ENCODE measurements at regions of chrX and their contacts with region 1.

Region 1: DNA sequence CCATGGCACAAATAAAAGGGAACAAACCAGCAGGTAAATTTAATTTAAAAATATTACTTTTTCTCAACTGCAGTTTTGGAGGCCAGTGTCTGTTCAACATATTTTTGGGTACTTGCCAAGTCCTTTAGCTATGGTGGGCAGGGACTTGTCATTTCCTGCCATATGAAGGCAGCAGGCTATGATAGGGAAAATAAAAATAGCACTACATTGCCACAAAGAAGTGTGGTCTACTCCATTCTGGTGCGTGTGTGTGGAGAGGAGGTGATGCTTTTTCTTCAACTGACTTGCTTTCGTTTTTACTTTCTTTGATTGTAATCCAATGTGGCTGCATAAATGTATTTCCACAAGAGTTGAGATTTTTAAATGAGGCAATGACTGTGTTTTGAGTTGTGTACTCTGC is 17.2 kb downstream of the GPR174 start:
- DNase-seq: peak in 33 of 35 experiments; percentile 11 to 83 (median 40)
- ATAC-seq: peak; percentile 88 to 94 (median 91)
- H3K4me3 ChIP-seq: peak overlapping the region; percentile 39 to 44
- H3K4me3 Mint-ChIP-seq: peak overlapping the region; percentile 86 to 95 (median 87)
- H3K27ac ChIP-seq: peak overlapping the region; percentile 91
- H3K27ac Mint-ChIP-seq: peak overlapping the region; percentile 97 to 100
- H3K4me1 ChIP-seq: peaks cover 28 to 42% of the 10 kb centered on the region in 2 experiments
- H3K4me1 Mint-ChIP-seq: peaks cover 78 to 81% (median 80%) of the 10 kb centered on the region in 3 donors
- H3K27me3 ChIP-seq: no peaks in the 10 kb centered on the region
- H3K27me3 Mint-ChIP-seq: no peaks in the 10 kb centered on the region

Region 2: GRCh38 chrX:79110731-79111130 is 50.9 kb before region 1 on chrX:
- CTCF ChIA-PET with region 1: no interaction called
- POLR2A ChIA-PET with region 1: interaction called, 3 to 14 read pairs
- DNase-seq: no peak
- ATAC-seq: no peak
- H3K4me3 ChIP-seq: no peak overlapping the region
- H3K4me3 Mint-ChIP-seq: peak overlapping the region in 1 of 3 donors; percentile 38
- H3K27ac ChIP-seq: peak overlapping the region; percentile 44
- H3K27ac Mint-ChIP-seq: peak overlapping the region; percentile 93 to 98
- H3K4me1 ChIP-seq: peaks cover 15% of the 10 kb centered on the region in 2 experiments
- H3K4me1 Mint-ChIP-seq: peaks cover 63 to 65% (median 64%) of the 10 kb centered on the region in 3 donors
- H3K27me3 ChIP-seq: no peaks in the 10 kb centered on the region
- H3K27me3 Mint-ChIP-seq: no peaks in the 10 kb centered on the region

Region 3: GRCh38 chrX:79122019-79122418 is 39.6 kb before region 1 on chrX:
- CTCF ChIA-PET with region 1: no interaction called
- POLR2A ChIA-PET with region 1: no interaction called
- DNase-seq: no peak
- ATAC-seq: no peak
- H3K4me3 ChIP-seq: no peak overlapping the region
- H3K4me3 Mint-ChIP-seq: no peak overlapping the region
- H3K27ac ChIP-seq: no peak overlapping the region
- H3K27ac Mint-ChIP-seq: no peak overlapping the region
- H3K4me1 ChIP-seq: peaks cover 0 to 1% of the 10 kb centered on the region in 2 experiments
- H3K4me1 Mint-ChIP-seq: peaks cover 20 to 27% (median 26%) of the 10 kb centered on the region in 3 donors
- H3K27me3 ChIP-seq: no peaks in the 10 kb centered on the region
- H3K27me3 Mint-ChIP-seq: peaks cover 0 to 19% of the 10 kb centered on the region in 2 donors

Region 4: DNA sequence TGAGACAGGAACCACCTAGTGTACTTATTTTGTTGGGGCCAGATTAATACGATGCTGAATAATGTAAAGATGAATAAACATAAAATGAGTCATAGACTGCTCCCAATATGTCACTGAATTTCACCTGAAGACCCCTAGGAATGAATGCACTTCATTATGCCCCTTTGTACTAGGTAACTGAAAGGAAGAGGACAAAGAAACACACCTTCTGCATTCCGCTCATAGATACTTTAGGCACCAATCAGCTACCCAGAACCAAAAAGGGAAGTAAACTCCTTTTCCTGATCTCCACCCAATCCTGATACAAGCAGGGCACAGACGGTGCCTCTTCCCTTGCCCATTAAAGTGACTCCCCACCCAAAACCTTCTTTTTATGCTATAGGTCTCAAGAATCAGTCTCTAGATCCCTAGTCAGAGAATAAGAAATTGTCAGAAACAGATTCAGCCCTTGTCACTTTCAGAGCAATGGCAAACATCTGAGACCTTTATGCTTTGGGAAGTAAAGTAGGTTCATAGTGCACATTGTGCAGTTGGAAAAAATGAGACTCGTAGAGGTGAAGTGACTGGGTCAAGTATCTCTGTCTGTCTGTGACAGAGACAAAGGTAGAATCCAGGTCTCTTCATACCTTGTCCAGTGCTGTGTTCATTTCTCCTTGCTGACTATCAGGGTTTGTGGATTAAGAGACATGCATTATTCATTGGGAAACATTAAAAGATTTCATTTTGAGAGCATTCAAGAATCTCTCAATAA is 14.8 kb before region 1 on chrX:
- CTCF ChIA-PET with region 1: interaction called, 3 to 5 read pairs
- POLR2A ChIA-PET with region 1: interaction called, 5 to 18 read pairs
- DNase-seq: peak in 4 of 35 experiments; percentile 6 to 47 (median 8)
- ATAC-seq: peak in 3 of 4 experiments; percentile 41 to 47 (median 43)
- H3K4me3 ChIP-seq: peak overlapping the region; percentile 46 to 68
- H3K4me3 Mint-ChIP-seq: peak overlapping the region; percentile 90 to 97 (median 96)
- H3K27ac ChIP-seq: peak overlapping the region; percentile 91
- H3K27ac Mint-ChIP-seq: peak overlapping the region; percentile 96 to 99
- H3K4me1 ChIP-seq: peaks cover 14 to 18% of the 10 kb centered on the region in 2 experiments
- H3K4me1 Mint-ChIP-seq: peaks cover 20 to 46% (median 28%) of the 10 kb centered on the region in 3 donors
- H3K27me3 ChIP-seq: no peaks in the 10 kb centered on the region
- H3K27me3 Mint-ChIP-seq: no peaks in the 10 kb centered on the region

Region 5: DNA sequence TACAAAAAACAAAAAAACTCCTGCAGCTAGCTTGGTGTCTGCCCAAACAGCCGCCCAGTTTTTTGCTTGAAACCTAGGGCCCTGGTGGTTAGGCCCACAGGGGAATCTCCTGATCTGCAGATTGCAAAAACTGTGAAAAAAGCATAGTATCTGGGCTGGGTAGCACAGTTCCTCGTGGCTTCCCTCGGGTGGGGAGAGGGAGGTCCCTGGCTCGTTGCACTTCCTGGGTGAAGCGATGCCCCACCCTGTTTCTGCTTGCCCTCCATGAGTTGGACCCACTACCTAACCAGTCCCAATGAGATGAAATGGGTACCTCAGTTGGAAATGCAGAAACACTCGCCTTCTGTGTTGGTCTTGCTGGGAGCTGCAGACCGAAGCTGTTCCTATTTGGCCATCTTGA is 1666.6 kb after region 1 on chrX:
- CTCF ChIA-PET with region 1: no interaction called
- POLR2A ChIA-PET with region 1: no interaction called
- DNase-seq: no peak
- ATAC-seq: no peak
- H3K4me3 ChIP-seq: no peak overlapping the region
- H3K4me3 Mint-ChIP-seq: no peak overlapping the region
- H3K27ac ChIP-seq: no peak overlapping the region
- H3K27ac Mint-ChIP-seq: no peak overlapping the region
- H3K4me1 ChIP-seq: no peaks in the 10 kb centered on the region
- H3K4me1 Mint-ChIP-seq: no peaks in the 10 kb centered on the region
- H3K27me3 ChIP-seq: no peaks in the 10 kb centered on the region
- H3K27me3 Mint-ChIP-seq: peaks cover 0 to 12% of the 10 kb centered on the region in 2 donors